ENCODE measurements at regions of chr19 and their contacts with region 1.

Region 1: DNA sequence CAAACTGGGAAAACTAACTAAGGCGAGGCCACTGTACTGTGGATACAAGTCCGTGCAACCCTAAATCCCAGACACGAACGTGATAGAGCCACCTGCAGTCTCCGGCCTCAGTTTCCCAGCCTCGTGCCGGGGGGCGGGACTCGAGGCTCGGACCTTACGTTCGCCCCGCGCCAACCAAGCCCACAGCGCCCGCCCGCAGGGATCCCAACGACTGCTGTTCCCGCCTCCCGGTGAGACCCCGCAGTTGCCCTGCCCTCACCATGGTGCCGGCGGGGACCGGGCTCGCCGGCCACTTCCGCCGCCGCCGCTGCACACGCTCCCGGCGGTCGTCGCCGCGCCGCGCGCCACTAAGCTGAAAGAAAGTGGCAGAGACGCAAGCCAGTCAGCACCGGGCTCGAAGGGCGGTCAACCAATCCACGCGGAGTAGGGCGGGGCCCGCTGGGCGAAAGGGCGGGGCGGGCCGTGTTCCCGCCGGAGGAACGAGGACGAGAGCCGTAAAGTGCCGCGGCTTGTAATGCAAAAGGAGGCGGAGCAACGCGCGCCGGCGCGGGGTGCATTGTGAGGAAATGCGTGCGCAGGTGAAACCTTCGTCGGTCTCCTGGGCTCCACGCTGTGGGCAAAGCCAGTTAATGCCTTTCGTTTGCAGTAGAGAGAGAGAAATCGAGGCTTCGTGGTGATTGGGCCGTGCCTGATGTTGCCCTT is at the start of gene LSM4:
- DNase-seq: peak; percentile 99
- CTCF ChIP-seq: peak; percentile 41

Region 2: DNA sequence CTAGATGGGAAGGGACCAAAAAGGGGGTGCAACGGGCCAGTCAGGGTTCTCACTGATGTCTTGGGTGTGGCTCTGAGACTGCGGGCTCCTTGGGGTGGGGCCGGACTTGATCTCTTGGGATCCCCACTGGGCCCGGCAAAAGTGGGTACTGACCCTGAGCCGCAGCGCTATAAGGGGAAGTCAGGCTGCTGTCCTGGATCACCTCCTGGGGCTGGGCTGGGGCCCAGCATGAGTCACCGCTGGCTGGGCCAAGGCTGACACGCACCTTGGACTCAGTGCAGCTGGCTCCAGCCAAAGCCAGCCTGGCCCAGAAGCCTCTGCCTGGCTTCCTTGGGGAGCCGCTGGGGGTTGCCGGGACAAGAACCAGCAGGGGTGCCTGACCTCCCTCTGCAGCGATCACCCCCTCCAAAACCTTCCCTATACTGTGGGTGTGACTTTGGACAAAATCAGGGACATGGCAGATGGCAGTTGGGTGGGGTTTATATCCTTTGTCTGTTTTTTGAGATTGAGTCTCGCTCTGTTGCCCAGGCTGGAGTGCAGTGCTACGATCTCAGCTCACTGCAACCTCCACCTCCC is 48.0 kb before region 1 on chr19:
- CTCF ChIA-PET with region 1: interaction called, 171 read pairs
- POLR2A ChIA-PET with region 1: interaction called, 154 read pairs
- DNase-seq: no peak
- CTCF ChIP-seq: no peak

Region 3: GRCh38 chr19:18304458-18305310 is 18.2 kb before region 1 on chr19:
- CTCF ChIA-PET with region 1: interaction called, 11 read pairs
- POLR2A ChIA-PET with region 1: interaction called, 4 read pairs
- DNase-seq: peak; percentile 89
- CTCF ChIP-seq: no peak

Region 4: GRCh38 chr19:18310118-18310909 is 12.6 kb before region 1 on chr19:
- CTCF ChIA-PET with region 1: interaction called, 86 read pairs
- POLR2A ChIA-PET with region 1: no interaction called
- DNase-seq: no peak
- CTCF ChIP-seq: no peak